WTC11 (cell line): ENCODE measurements at regions of chr2 and their contacts with region 1.

Region 1: GRCh38 chr2:84817239-84817655 is 63.6 kb downstream of the TRABD2A start:
- DNase-seq: no peak
- ATAC-seq: no peak
- H3K4me3 Mint-ChIP-seq: no peak overlapping the region
- H3K27ac Mint-ChIP-seq: no peak overlapping the region
- H3K4me1 Mint-ChIP-seq: no peaks in the 10 kb centered on the region
- H3K27me3 Mint-ChIP-seq: no peaks in the 10 kb centered on the region
- CTCF ChIP-seq: no peak

Region 2: DNA sequence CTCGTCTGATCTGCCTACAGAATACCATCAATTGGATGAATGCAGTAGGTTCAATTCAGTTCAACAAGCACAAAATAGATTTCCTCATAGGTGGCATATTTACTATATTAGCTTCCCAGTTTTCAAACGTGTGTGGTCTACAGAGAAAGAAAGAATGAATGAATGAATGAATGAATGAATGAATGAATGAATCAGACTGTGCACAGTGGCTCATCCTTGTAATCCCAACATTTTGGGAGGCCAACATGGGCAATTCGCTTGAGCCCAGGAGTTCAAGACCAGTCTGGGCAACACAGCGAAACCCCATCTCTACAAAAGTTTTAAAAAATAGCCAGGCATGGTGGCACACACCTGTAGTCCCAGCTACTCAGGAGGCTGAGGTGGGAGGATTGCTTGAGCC is 31.3 kb before region 1 on chr2:
- CTCF ChIA-PET with region 1: interaction called, 11 read pairs
- POLR2A ChIA-PET with region 1: no interaction called
- DNase-seq: no peak
- ATAC-seq: no peak
- H3K4me3 Mint-ChIP-seq: no peak overlapping the region
- H3K27ac Mint-ChIP-seq: no peak overlapping the region
- H3K4me1 Mint-ChIP-seq: peaks cover 29% of the 10 kb centered on the region
- H3K27me3 Mint-ChIP-seq: no peaks in the 10 kb centered on the region
- CTCF ChIP-seq: no peak